Breast epithelium (tissue), 4 donors: ENCODE measurements at regions of chr20 and their contacts with region 1.

Region 1: GRCh38 chr20:42461965-42462593 is 727.6 kb downstream of the PTPRT start:
- DNase-seq: no peak
- H3K4me3 ChIP-seq: no peak overlapping the region
- H3K27ac ChIP-seq: no peak overlapping the region
- H3K4me1 ChIP-seq: no peaks in the 10 kb centered on the region
- H3K27me3 ChIP-seq: no peaks in the 10 kb centered on the region
- CTCF ChIP-seq: no peak
- POLR2A ChIP-seq: no peak

Region 2: DNA sequence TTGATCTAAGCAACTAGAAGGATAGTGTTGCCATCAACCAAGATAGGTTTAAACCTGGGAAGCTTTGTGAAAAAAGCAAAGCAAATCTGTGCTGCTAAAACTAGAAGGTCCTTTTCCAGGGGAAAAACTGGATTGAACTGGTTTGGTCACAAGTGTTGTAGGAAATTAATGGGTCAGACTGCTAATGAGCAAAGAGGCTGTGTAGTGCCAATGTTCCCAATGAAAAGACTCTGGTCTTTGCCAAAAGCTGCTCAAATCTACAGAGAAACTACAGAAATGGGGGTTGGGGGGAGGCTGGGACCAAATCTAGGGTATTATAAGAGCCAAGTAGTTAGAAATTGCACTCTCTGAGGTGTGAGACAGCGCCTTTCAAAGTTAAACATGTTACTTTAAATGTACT is 1239.8 kb before region 1 on chr20:
- intact Hi-C with region 1: no loop called
- DNase-seq: no peak
- H3K4me3 ChIP-seq: no peak overlapping the region
- H3K27ac ChIP-seq: peak overlapping the region; percentile 83 to 87
- H3K4me1 ChIP-seq: peaks cover 0 to 3% of the 10 kb centered on the region in 2 donors
- H3K27me3 ChIP-seq: no peaks in the 10 kb centered on the region
- CTCF ChIP-seq: no peak
- POLR2A ChIP-seq: no peak

Region 3: DNA sequence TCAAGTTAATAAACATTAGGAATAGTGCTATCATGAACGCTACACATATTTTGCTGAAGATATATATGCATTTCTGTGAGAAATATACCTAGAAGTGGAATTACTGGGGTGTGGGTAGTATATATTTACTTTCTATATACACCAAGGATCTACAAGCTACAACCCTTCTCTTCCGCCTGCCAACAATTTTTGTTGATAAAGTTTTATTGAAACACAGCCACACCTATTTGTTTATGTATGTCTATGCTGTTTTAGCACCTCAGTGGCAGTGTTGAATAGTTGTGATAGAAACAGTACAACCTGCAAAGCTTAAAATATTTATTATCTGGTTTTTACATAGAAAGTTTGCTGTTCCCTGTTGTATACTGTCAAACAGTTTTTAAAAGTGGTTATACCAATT is 39.3 kb after region 1 on chr20:
- intact Hi-C with region 1: loop called (anchors 2 kb)
- DNase-seq: no peak
- H3K4me3 ChIP-seq: no peak overlapping the region
- H3K27ac ChIP-seq: no peak overlapping the region
- H3K4me1 ChIP-seq: no peaks in the 10 kb centered on the region
- H3K27me3 ChIP-seq: no peaks in the 10 kb centered on the region
- CTCF ChIP-seq: no peak
- POLR2A ChIP-seq: no peak